ENCODE measurements at regions of chr4 and their contacts with region 1.

Region 1: DNA sequence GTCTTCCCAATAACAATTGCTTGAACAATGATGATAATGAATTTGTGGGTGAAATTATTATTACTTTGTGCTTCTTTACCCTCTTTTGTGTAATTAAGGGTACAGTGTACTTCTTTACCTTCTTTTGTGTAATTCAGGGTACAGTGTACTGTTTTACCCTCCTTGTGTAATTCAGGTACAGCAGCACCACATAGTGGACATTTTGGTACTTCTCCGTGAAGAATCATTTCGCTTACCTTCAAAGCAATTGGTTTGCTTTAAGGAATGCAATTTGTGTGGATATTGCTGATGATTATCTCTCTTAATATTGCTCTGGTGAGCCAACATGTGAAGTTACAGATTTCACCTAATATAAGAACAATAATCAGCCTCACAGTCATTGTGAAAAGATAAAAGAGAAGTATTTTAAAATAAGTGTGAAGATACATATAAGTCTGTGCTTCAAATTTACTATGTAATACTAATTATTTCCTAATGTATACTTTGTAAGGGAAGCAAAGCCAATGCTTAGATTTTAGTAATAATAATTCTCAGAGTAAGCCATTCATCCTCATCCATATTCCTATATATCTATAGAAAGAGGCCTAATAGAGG is 27.2 kb upstream of the SEC24B start:
- DNase-seq: peak; percentile 71
- ATAC-seq: peak; percentile 78
- H3K4me3 ChIP-seq: no peak overlapping the region
- H3K27ac ChIP-seq: no peak overlapping the region
- H3K4me1 ChIP-seq: no peaks in the 10 kb centered on the region
- H3K27me3 ChIP-seq: 0 out of 2 replicates have a peak, but pooled peaks cover under 1% of the 10 kb centered on the region
- CTCF ChIP-seq: peak; percentile 77
- POLR2A ChIP-seq: no peak
- RAD21 ChIP-seq: peak; percentile 80

Region 2: DNA sequence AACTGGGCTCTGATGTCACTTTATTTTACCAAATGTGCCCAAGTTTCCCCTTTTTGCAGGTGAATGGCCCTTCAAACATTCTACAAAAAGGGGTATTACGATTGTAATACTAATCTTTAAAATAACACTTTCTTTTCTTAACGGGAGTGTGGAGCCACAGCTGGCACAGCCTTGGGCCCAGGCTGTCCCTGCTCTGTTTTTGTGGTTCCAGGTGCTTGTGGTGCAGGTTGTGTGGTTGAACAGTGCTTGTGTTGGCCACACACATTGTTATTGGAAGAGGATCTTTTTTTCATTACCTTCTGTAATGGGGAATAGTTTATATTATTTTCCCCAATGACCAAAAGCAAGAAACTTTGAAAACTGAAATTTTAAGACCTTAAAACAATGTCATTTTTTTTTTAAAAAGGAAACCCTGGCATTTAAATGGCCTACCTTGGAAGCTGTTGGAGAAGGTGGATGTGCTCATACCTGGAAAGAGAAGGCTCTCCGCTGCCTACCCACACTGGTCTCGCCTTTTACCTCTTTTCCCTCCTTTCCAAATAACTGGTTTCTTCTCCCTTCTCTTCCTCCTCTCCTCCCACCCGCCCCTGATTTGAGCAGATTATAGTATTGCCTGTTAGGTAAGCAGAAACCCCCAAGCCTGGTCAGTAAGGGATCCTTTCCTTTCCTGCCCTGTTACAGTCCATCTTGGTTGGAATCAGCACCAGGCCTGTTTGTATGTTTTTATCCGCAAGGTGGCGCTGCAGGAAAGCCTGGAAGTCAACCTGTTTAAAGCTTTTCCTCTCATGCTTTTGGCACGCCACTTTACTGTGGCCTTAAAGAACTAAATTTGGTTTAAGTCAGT is 1388.2 kb before region 1 on chr4:
- CTCF ChIA-PET with region 1: no interaction called
- POLR2A ChIA-PET with region 1: no interaction called
- dilution Hi-C with region 1: no loop called
- in situ Hi-C with region 1: no loop called
- intact Hi-C with region 1: loop called (anchors 2 kb)
- DNase-seq: peak; percentile 77
- ATAC-seq: peak; percentile 93
- H3K4me3 ChIP-seq: no peak overlapping the region
- H3K27ac ChIP-seq: no peak overlapping the region
- H3K4me1 ChIP-seq: no peaks in the 10 kb centered on the region
- H3K27me3 ChIP-seq: no peaks in the 10 kb centered on the region
- CTCF ChIP-seq: peak; percentile 84
- POLR2A ChIP-seq: no peak
- RAD21 ChIP-seq: peak; percentile 87

Region 3: GRCh38 chr4:108683479-108683878 is 723.0 kb before region 1 on chr4:
- CTCF ChIA-PET with region 1: no interaction called
- POLR2A ChIA-PET with region 1: no interaction called
- dilution Hi-C with region 1: no loop called
- in situ Hi-C with region 1: loop called (anchors 10 kb)
- intact Hi-C with region 1: loop called (anchors 1 kb)
- DNase-seq: peak; percentile 41
- ATAC-seq: peak; percentile 56; the same call in 1 of the 2 replicates
- H3K4me3 ChIP-seq: no peak overlapping the region
- H3K27ac ChIP-seq: no peak overlapping the region
- H3K4me1 ChIP-seq: no peaks in the 10 kb centered on the region
- H3K27me3 ChIP-seq: no peaks in the 10 kb centered on the region
- CTCF ChIP-seq: peak; percentile 37; the same call in 1 of the 2 replicates
- POLR2A ChIP-seq: no peak
- RAD21 ChIP-seq: peak; percentile 35

Region 4: DNA sequence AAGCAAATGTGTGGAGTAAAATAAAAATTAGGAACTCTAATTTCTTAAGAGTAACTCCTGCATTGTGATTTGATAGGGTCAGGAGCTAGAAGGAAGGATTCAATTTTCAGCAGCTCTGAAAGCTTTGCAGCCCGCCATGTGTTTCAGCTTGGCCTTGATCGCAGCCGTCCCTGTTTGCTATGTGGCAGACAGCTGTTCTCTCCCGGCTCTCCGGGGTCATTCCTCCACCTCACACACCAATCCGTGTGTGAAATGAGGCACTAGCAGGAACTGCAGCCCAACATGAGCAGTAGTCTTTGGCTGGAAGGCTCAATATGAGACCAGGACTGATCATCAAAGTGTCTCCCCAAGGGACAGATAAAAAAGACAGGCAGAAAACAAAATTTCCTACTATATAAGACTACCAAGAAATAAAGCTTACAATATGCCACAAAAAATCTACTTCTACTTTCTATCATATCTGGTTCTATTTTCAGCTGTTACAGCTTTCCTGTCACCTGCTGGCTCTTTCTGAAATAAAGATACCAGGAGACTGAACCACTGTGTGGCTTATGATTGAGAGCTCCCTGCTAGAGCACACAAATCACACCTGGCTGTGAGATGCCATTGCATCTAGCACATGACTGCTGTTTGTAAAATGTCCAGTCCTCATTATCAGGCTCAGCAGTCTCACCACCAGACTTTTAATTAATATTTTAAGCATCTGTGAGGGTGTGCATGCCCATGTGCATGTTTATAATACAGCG is 16.9 kb before region 1 on chr4:
- CTCF ChIA-PET with region 1: no interaction called
- POLR2A ChIA-PET with region 1: no interaction called
- dilution Hi-C with region 1: no loop called
- in situ Hi-C with region 1: no loop called
- intact Hi-C with region 1: no loop called
- DNase-seq: no peak
- ATAC-seq: peak; percentile 32; the same call in 1 of the 2 replicates
- H3K4me3 ChIP-seq: no peak overlapping the region
- H3K27ac ChIP-seq: no peak overlapping the region
- H3K4me1 ChIP-seq: no peaks in the 10 kb centered on the region
- H3K27me3 ChIP-seq: peaks cover 3% of the 10 kb centered on the region
- CTCF ChIP-seq: no peak
- POLR2A ChIP-seq: no peak
- RAD21 ChIP-seq: no peak